GM12878 (cell line): ENCODE measurements at regions of chr1 and their contacts with region 1.

Region 1: GRCh38 chr1:169601093-169601881 is 15.0 kb upstream of the F5 start:
- DNase-seq: peak; percentile 52
- ATAC-seq: peak; percentile 81
- H3K4me3 ChIP-seq: no peak overlapping the region
- H3K27ac ChIP-seq: no peak overlapping the region
- H3K4me1 ChIP-seq: peaks cover 10% of the 10 kb centered on the region
- H3K27me3 ChIP-seq: no peaks in the 10 kb centered on the region
- CTCF ChIP-seq: peak; percentile 42 to 73 (median 53); a peak in 5 of 6 replicates
- EP300 ChIP-seq: no peak
- POLR2A ChIP-seq: no peak
- RAD21 ChIP-seq: peak; percentile 87

Region 2: DNA sequence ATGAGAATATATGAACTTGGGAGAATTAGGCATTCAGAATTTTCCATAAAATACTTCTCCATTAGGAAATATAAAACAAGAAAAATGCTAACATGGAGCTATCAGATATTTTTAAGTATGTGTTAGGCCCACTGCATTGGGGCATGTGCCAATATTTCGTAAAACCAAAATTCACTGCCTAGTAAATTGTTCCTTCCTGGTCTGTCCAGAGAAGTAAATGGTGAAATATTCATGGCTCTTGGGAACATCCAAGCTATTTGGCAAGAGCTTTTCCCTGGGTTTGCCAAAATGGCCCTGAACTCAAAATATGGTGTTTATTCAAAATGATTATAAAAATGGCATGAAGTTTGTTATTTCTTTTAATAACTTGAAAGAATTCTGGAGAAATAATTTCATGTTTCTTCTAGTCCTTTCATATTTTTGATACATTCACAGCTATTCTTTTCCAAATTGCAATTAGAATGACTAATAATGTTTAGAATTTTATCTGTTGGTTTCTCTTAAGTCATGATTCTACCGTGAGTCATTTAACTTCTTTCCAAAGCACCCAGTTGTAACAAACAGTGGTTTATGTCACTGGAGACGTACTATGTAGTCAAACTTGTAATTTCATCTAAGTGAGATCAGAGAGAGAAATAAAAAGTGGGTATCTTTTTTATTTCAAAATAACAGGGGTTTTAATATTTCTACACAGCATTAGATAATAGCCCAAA is 89.8 kb before region 1 on chr1:
- CTCF ChIA-PET with region 1: no interaction called
- POLR2A ChIA-PET with region 1: no interaction called
- RAD21 ChIA-PET with region 1: no interaction called
- SMC1A ChIA-PET with region 1: no interaction called
- in situ Hi-C with region 1: no loop called
- intact Hi-C with region 1: no loop called
- DNase-seq: no peak
- ATAC-seq: 0 out of 3 replicates have a peak, but pooled peaks have one; percentile 28
- H3K4me3 ChIP-seq: no peak overlapping the region
- H3K27ac ChIP-seq: no peak overlapping the region
- H3K4me1 ChIP-seq: no peaks in the 10 kb centered on the region
- H3K27me3 ChIP-seq: no peaks in the 10 kb centered on the region
- CTCF ChIP-seq: no peak
- EP300 ChIP-seq: no peak
- POLR2A ChIP-seq: no peak
- RAD21 ChIP-seq: no peak

Region 3: DNA sequence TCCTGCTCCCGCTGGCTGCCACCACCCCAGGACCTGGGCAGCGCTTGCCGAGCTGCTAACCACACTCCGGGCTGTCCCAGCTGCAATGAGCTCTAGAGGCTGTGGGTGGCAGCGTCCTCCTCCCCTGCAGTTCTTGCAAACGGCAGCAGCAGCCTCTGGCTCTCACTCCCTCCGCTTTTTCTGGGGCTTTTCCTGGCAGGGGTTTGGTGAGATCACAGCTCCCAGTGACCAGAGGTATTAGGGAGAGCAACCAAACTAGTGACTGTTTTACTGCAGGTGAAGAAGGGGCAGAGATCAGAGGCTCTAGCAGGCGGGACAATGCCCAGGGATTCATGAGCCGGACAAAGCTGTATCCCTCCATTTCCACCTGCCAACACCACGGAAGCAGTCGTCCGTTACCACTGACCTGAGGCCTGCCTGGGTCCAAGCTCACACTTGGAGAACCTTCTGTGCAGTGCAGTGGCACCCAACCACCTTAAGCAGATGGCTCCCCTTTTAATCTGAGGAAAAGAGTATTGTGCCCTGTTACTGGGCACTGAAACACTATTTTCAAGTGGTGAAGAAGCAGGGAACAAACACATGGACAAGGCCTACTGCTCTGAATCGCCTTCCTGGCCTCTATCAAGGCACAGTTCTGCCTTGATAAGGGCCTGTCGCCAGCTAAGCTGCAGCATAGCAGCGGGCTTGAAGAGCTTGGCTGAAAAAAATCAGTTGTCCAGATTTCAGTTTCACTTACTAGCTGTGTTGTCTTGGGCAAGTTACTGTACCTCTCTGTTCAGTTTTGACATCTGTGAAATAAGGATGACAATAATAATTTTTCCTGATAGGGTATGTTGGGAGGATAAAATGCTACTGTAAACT is 14.7 kb before region 1 on chr1 and contains the start of gene F5:
- CTCF ChIA-PET with region 1: interaction called, 17 read pairs
- POLR2A ChIA-PET with region 1: no interaction called
- RAD21 ChIA-PET with region 1: interaction called, 13 read pairs
- SMC1A ChIA-PET with region 1: interaction called, 23 read pairs
- in situ Hi-C with region 1: no loop called
- intact Hi-C with region 1: no loop called
- DNase-seq: no peak
- ATAC-seq: peak; percentile 99
- H3K4me3 ChIP-seq: 0 out of 2 replicates have a peak within 1 kb of the TSS, but pooled peaks have one; percentile 15
- H3K27ac ChIP-seq: no peak within 1 kb of the TSS
- H3K4me1 ChIP-seq: peaks cover 5% of the 10 kb centered on the region; the same call in 1 of the 2 replicates
- H3K27me3 ChIP-seq: no peaks in the 10 kb centered on the region; a peak in 1 of 4 replicates
- CTCF ChIP-seq: peak; percentile 71 to 87 (median 77)
- EP300 ChIP-seq: no peak
- POLR2A ChIP-seq: no peak
- RAD21 ChIP-seq: peak; percentile 52
- polyA plus RNA-seq, gene F5: 0.29 to 0.46 TPM

Region 4: GRCh38 chr1:169680377-169681019 is 79.2 kb after region 1 on chr1:
- CTCF ChIA-PET with region 1: interaction called, 17 read pairs
- POLR2A ChIA-PET with region 1: no interaction called
- RAD21 ChIA-PET with region 1: interaction called, 15 read pairs
- SMC1A ChIA-PET with region 1: interaction called, 37 read pairs
- in situ Hi-C with region 1: no loop called
- intact Hi-C with region 1: no loop called
- DNase-seq: peak; percentile 73
- ATAC-seq: peak; percentile 88
- H3K4me3 ChIP-seq: peak overlapping the region; percentile 37
- H3K27ac ChIP-seq: peak overlapping the region; percentile 76
- H3K4me1 ChIP-seq: peaks cover 49% of the 10 kb centered on the region
- H3K27me3 ChIP-seq: no peaks in the 10 kb centered on the region
- CTCF ChIP-seq: no peak
- EP300 ChIP-seq: no peak
- POLR2A ChIP-seq: no peak
- RAD21 ChIP-seq: no peak

Region 5: GRCh38 chr1:169694304-169695075 is 93.2 kb after region 1 on chr1:
- CTCF ChIA-PET with region 1: interaction called, 51 read pairs
- POLR2A ChIA-PET with region 1: interaction called, 6 read pairs
- RAD21 ChIA-PET with region 1: interaction called, 29 read pairs
- SMC1A ChIA-PET with region 1: interaction called, 102 read pairs
- in situ Hi-C with region 1: no loop called
- intact Hi-C with region 1: no loop called
- DNase-seq: no peak
- ATAC-seq: peak; percentile 51
- H3K4me3 ChIP-seq: no peak overlapping the region
- H3K27ac ChIP-seq: peak overlapping the region; percentile 67; the same call in 1 of the 2 replicates
- H3K4me1 ChIP-seq: peaks cover 80% of the 10 kb centered on the region
- H3K27me3 ChIP-seq: no peaks in the 10 kb centered on the region
- CTCF ChIP-seq: peak in 2 of 3 experiments; percentile 10 to 26; a peak in 2 of 6 replicates
- EP300 ChIP-seq: no peak
- POLR2A ChIP-seq: no peak
- RAD21 ChIP-seq: peak; percentile 42; the same call in 1 of the 2 replicates

Region 6: GRCh38 chr1:169809370-169810095 is 208.2 kb after region 1 on chr1:
- CTCF ChIA-PET with region 1: interaction called, 38 read pairs
- POLR2A ChIA-PET with region 1: no interaction called
- RAD21 ChIA-PET with region 1: interaction called, 11 read pairs
- SMC1A ChIA-PET with region 1: interaction called, 24 read pairs
- in situ Hi-C with region 1: no loop called
- intact Hi-C with region 1: loop called (anchors 1 kb)
- DNase-seq: no peak
- ATAC-seq: peak; percentile 77
- H3K4me3 ChIP-seq: no peak overlapping the region
- H3K27ac ChIP-seq: no peak overlapping the region
- H3K4me1 ChIP-seq: no peaks in the 10 kb centered on the region
- H3K27me3 ChIP-seq: no peaks in the 10 kb centered on the region
- CTCF ChIP-seq: peak; percentile 25 to 54 (median 51); a peak in 5 of 6 replicates
- EP300 ChIP-seq: no peak
- POLR2A ChIP-seq: no peak
- RAD21 ChIP-seq: peak; percentile 64